Aorta (tissue), 5 donors: ENCODE measurements at regions of chr4 and their contacts with region 1.

Region 1: GRCh38 chr4:81207828-81208227 is 7.2 kb downstream of the PRKG2 start:
- DNase-seq: no peak
- ATAC-seq: no peak
- H3K4me3 ChIP-seq: no peak overlapping the region
- H3K27ac ChIP-seq: no peak overlapping the region
- H3K4me1 ChIP-seq: no peaks in the 10 kb centered on the region
- H3K27me3 ChIP-seq: no peaks in the 10 kb centered on the region

Region 2: DNA sequence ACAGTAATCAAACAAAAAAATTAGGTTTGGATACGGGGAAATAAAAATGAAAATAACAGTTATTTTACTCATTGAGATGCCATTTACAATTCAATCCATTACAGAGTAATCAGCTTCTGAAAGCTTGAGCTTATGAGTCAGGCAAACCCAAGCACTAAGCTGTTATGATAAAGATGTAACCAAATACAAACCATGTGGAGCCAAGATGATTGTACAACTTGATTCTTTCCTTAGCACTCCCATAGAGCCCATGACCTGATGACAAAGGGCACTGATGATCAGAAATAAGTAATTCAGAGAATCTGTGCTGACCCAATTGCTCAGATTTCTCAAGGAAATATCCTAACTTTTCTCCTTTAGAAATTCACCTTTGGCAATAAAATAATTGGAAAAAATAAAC is 47.7 kb after region 1 on chr4:
- intact Hi-C with region 1: no loop called
- DNase-seq: no peak
- ATAC-seq: no peak
- H3K4me3 ChIP-seq: no peak overlapping the region
- H3K27ac ChIP-seq: no peak overlapping the region
- H3K4me1 ChIP-seq: peaks cover 0 to 4% of the 10 kb centered on the region in 2 donors
- H3K27me3 ChIP-seq: no peaks in the 10 kb centered on the region

Region 3: DNA sequence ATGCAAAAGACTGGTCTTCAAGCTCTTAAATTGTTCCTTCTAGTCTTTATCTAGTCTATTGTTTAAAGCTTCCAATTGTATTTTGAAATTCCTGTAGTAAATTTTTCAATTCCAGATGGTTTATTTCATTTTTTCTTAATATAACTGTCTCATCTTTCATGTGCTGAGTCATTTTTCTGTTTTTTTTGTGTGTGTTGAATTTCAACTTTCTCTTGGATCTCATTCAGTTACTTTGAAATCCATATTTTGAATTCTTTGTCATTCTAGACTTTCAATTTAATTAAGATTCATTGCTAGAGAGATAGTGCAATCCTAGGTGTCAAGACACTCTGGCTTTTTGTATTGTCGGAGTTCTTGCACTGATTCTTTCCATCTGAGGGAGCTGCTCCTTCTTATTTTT is 135.2 kb after region 1 on chr4:
- intact Hi-C with region 1: loop called in 1 of 2 experiments (anchors 10 kb)
- DNase-seq: no peak
- ATAC-seq: no peak
- H3K4me3 ChIP-seq: no peak overlapping the region
- H3K27ac ChIP-seq: no peak overlapping the region
- H3K4me1 ChIP-seq: no peaks in the 10 kb centered on the region
- H3K27me3 ChIP-seq: no peaks in the 10 kb centered on the region